Dendritic cell treated with granulocyte-macrophage colony-stimulating factor and Interleukin-4, amounts not matched to agents 40 ng/mL and 50 ng/mL, for 4 days (primary cell): ENCODE measurements at regions of chr3 and their contacts with region 1.

Region 1: DNA sequence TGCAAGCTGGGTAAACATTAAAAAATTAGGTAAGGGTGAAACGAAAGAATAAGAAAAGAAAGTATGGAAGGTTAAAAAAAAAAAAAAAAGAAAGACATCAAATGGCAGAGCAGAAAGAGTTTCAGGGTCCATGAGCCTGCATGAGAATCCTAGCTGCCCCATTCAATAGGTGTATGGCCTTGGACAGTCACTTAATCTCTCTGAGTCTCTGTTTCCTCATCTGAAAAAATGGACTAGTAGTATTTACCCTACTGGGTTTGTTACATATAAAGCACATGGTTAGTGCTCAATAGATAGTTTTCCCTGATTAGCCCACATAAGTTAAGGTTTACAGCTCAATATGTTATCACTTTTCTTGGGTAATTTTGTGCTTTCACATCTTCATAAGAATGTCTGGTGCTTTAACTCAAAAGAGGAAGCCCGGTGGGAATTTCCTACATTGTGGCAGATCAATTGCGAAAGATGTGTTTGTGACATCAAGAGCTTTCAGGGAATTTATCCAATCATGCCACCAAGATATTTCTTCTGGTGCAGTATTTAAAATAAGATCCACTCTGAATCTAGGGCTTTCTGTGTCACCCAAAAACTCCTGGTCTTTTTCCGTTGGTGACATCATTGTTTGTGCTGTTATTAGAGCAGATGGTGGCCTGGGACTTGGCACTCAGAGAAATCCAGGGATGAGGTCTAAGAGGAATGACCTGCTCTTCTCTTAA is 57.2 kb upstream of the UBE2E1 start:
- H3K4me3 Mint-ChIP-seq: no peak overlapping the region
- H3K27ac Mint-ChIP-seq: peak overlapping the region; percentile 33
- H3K4me1 Mint-ChIP-seq: peaks cover 29% of the 10 kb centered on the region
- H3K27me3 Mint-ChIP-seq: no peaks in the 10 kb centered on the region

Region 2: DNA sequence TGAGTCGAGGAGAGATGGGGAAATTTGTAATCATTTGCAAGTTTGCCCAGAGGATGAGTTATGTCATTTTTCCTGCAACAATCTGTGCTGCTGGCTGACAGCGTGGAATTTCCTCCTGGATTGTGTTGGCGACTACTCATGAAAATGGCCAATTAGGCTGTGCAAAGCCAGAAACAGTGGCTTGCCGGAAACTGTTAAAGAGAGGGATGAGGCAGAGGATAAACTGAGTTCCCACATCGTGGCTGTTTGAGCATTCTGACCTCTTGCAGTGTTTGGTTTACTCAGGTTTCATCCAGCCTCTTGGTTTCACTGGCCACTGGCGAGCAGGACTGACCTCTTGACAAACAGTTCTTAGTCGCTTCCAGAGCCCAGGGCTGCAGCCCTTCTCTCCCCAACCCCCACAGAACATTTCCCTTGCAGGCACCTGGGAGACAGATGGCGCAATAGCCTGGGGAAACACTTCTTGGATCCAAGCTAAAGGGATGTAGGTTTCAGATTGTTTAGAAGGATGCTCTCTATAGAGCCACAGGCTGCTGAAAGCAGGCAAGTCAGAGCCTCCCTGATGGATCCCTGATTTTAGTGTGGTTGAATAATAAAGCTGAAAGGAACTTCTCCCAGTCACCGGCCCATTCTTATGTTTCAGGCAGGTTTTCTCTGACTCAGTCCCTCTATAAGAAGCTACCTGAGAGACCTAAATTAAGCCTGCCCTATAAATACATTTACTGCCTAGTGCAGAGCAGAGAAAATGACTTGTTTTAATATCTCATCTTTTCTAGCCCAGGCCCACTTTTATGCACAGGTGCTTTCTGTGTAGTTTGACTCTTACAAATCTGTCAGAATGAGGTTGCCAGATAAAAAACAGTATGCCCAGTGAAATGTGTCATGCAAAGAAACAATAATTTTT is 35.6 kb before region 1 on chr3:
- intact Hi-C with region 1: no loop called
- H3K4me3 Mint-ChIP-seq: no peak overlapping the region
- H3K27ac Mint-ChIP-seq: no peak overlapping the region
- H3K4me1 Mint-ChIP-seq: peaks cover 18% of the 10 kb centered on the region
- H3K27me3 Mint-ChIP-seq: peaks cover 11% of the 10 kb centered on the region

Region 3: DNA sequence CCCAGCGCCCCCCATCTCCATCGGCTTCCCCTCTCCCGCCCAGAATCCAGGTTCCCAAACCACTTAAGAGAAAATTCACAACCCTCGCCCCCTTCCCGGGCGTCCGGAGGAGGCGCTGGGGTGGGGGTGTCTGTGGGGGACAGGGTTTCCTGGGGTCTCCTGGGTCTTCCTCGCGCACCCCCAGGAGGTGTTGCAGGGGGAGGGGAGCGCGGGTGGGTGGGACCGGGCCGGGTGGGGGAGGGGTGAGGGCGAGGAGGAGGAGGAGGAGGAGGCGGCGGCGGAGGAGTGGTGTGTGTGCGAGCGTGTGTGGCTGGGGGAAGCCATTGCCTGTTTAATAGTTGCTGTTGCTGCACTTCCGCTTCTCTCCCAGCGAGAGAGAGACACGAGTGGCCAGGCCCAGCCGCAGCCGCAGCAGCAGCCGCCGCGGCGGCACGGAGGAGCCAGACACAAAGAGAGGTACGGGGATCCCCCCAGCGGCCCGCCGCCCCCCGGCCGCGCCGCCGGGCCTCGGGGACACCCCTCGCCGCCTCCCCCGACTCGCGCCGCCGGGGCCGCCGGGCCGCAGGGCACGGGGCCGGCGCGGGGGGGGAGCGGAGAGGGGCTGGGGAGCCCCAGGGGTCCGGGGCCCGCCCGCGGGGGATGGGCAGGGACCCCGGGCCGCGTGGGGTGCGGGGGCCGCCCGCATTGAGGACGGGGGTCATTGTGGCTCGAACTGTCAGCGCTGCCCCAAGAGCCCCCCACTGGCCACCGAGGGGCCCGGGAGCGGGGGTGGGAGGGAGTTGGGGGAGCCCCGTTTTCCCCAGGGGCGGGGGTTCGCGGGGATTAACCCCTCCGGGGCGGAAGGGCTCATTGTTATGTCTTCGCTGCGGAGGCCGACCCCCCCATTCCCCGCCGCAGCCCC is 57.3 kb after region 1 on chr3 and contains the start of gene UBE2E1:
- intact Hi-C with region 1: loop called (anchors 5 kb)
- H3K4me3 Mint-ChIP-seq: peak within 1 kb of the TSS; percentile 99
- H3K27ac Mint-ChIP-seq: peak within 1 kb of the TSS; percentile 99
- H3K4me1 Mint-ChIP-seq: peaks cover 45% of the 10 kb centered on the region
- H3K27me3 Mint-ChIP-seq: peaks cover 5% of the 10 kb centered on the region